H1 (cell line): ENCODE measurements at regions of chr19 and their contacts with region 1.

Region 1: DNA sequence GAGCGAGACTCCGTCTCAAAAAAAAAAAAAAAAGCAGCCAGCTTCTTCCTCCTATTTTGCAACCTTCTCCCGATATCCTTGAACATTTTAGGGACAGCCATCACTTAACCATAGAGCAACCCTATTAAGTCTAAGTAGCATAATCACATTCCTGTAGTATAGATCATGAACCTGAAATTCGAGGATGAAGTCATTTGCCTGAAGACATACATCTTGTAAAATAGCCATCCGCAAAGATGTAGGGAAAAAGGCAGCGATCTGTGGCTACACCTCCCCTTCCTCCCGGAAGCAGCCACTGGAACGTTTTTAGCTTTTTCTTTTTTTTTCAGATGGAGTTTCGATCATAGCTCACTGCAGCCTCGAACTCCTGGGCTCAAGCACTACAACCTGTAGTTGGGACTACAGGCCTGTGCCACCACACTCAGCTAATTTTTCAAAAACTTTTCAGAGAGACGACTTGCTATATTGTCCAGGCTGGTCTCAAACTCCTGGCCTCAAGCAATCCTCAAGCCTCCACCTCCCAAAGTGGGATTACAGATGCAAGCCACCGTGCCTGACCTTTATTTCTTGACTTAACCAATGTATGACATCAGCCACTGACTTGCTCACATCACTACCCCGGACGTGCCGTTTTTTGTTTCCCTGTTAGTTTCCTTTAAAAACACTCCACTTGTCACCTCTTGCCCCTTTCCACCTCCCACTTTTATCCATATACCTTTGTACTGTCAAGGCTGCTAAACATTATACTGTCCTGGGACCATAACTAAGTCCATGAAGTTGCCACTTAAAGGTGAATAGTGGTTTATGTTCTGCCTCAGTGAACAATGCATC is 2.0 kb upstream of the EPHX3 start:
- DNase-seq: no peak
- H3K4me3 ChIP-seq: no peak overlapping the region
- H3K27ac ChIP-seq: no peak overlapping the region
- H3K4me1 ChIP-seq: peaks cover 2 to 9% (median 5%) of the 10 kb centered on the region in 4 experiments; a peak in 6 of 7 replicates
- H3K27me3 ChIP-seq: no peaks in the 10 kb centered on the region
- CTCF ChIP-seq: no peak
- EP300 ChIP-seq: no peak
- POLR2A ChIP-seq: peak in 1 of 2 experiments; percentile 32; a peak in 1 of 3 replicates
- RAD21 ChIP-seq: no peak

Region 2: GRCh38 chr19:15195371-15196334 is 38.6 kb before region 1 on chr19:
- CTCF ChIA-PET with region 1: interaction called, 13 read pairs
- POLR2A ChIA-PET with region 1: interaction called, 58 read pairs
- DNase-seq: peak in 1 of 2 experiments; percentile 98
- H3K4me3 ChIP-seq: peak overlapping the region; percentile 49 to 80 (median 56)
- H3K27ac ChIP-seq: peak overlapping the region; percentile 73
- H3K4me1 ChIP-seq: peaks cover 4 to 15% (median 9%) of the 10 kb centered on the region in 4 experiments
- H3K27me3 ChIP-seq: no peaks in the 10 kb centered on the region; a peak in 1 of 7 replicates
- CTCF ChIP-seq: peak; percentile 33 to 45 (median 35)
- EP300 ChIP-seq: peak in 1 of 2 experiments; percentile 60; a peak in 1 of 3 replicates
- POLR2A ChIP-seq: no peak
- RAD21 ChIP-seq: peak in 1 of 2 experiments; percentile 35; a peak in 2 of 4 replicates

Region 3: GRCh38 chr19:15222738-15223648 is 11.3 kb before region 1 on chr19:
- CTCF ChIA-PET with region 1: interaction called, 9 read pairs
- POLR2A ChIA-PET with region 1: interaction called, 25 read pairs
- DNase-seq: peak; percentile 90 to 92
- H3K4me3 ChIP-seq: peak overlapping the region; percentile 62 to 74 (median 62)
- H3K27ac ChIP-seq: peak overlapping the region; percentile 60
- H3K4me1 ChIP-seq: peaks cover 0 to 3% (median 1%) of the 10 kb centered on the region in 4 experiments; a peak in 4 of 7 replicates
- H3K27me3 ChIP-seq: no peaks in the 10 kb centered on the region
- CTCF ChIP-seq: peak in 1 of 3 experiments; percentile 7; a peak in 1 of 4 replicates
- EP300 ChIP-seq: no peak
- POLR2A ChIP-seq: no peak; a peak in 2 of 3 replicates
- RAD21 ChIP-seq: peak in 1 of 2 experiments; percentile 24; a peak in 3 of 4 replicates

Region 4: GRCh38 chr19:15251749-15252397 is 17.6 kb after region 1 on chr19:
- CTCF ChIA-PET with region 1: interaction called, 81 read pairs
- POLR2A ChIA-PET with region 1: interaction called, 21 read pairs
- DNase-seq: peak; percentile 46 to 84
- H3K4me3 ChIP-seq: no peak overlapping the region; a peak in 2 of 8 replicates
- H3K27ac ChIP-seq: no peak overlapping the region
- H3K4me1 ChIP-seq: peaks cover 0 to 15% (median 4%) of the 10 kb centered on the region in 4 experiments; a peak in 5 of 7 replicates
- H3K27me3 ChIP-seq: no peaks in the 10 kb centered on the region
- CTCF ChIP-seq: peak; percentile 67 to 71 (median 71)
- EP300 ChIP-seq: no peak
- POLR2A ChIP-seq: no peak
- RAD21 ChIP-seq: peak; percentile 38 to 52